PC-3 (cell line): ENCODE measurements at regions of chr12 and their contacts with region 1.

Region 1: DNA sequence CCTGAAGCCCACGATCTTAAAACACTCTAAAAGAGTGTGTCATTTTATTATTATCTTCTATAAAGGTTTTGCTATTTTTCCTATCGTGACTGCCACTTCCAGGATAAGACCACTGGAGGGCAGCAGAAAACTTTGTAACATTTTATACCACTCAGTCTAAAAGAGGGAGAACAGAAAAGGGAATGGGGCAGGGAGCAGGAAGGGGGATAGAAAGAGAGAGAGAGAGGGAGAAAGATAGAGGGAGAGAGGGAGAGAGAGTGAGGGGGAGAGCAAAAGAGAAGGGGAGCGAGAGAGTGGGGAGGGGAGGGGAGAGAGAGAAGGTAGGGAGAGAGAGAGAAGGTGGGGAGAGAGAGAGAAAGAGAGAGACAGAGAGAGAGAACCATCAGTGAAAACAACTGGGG is 2.0 kb upstream of the ART4 start:
- DNase-seq: peak; percentile 75
- ATAC-seq: peak; percentile 53
- H3K4me3 ChIP-seq: no peak overlapping the region
- H3K27ac ChIP-seq: no peak overlapping the region
- H3K4me1 ChIP-seq: peaks cover 20% of the 10 kb centered on the region
- H3K27me3 ChIP-seq: no peaks in the 10 kb centered on the region
- CTCF ChIP-seq: peak; percentile 78

Region 2: DNA sequence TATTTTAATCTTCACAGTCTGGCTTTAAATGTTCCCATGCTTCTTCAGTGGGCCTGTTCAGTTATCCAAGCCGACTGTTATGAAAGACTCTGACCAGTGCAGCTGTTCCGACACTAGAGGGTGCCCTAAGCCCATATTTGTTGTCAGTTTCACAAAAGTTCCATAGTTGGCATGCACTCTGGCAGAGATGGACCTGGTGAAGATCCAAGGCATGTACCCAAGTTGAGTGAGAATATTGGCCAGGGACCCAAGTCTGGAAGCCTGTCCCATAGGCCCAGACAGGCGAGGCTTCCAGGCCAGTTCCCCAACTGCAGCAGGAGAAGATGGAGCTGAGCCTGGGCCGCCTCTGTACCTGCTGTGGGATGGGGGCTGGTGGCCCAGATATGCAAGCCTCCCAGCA is 121.6 kb before region 1 on chr12:
- CTCF ChIA-PET with region 1: no interaction called
- POLR2A ChIA-PET with region 1: no interaction called
- intact Hi-C with region 1: loop called (anchors 2 kb)
- DNase-seq: peak; percentile 62
- ATAC-seq: peak; percentile 65
- H3K4me3 ChIP-seq: no peak overlapping the region
- H3K27ac ChIP-seq: no peak overlapping the region
- H3K4me1 ChIP-seq: no peaks in the 10 kb centered on the region
- H3K27me3 ChIP-seq: no peaks in the 10 kb centered on the region
- CTCF ChIP-seq: peak; percentile 68

Region 3: DNA sequence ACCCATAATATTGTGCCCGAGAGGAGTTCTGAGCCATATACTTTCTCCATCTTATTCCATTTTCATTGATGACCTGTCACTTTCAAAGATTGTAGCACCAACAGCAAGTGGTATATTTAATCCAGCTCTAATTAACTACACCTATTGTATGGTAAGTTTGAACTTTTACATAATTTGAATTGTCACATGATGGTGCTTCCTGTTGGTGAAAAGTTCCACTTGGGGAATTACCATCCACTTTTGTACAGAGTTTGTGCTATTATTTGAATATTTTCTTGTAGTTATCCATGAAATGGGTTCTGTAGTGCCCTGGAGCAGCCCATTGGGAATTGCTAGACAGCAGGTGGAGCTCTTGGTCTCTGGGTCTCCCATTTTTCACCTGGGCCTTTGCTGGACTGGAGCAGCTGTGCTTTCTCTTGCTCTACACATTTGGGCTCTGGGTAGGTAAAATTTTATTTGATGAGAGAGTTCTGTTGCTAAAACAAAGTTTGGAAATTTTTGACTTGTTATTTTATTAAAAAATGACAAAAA is 34.3 kb before region 1 on chr12:
- CTCF ChIA-PET with region 1: no interaction called
- POLR2A ChIA-PET with region 1: no interaction called
- intact Hi-C with region 1: loop called (anchors 2 kb)
- DNase-seq: peak; percentile 61
- ATAC-seq: peak; percentile 87
- H3K4me3 ChIP-seq: no peak overlapping the region
- H3K27ac ChIP-seq: no peak overlapping the region
- H3K4me1 ChIP-seq: no peaks in the 10 kb centered on the region
- H3K27me3 ChIP-seq: no peaks in the 10 kb centered on the region
- CTCF ChIP-seq: peak; percentile 77

Region 4: DNA sequence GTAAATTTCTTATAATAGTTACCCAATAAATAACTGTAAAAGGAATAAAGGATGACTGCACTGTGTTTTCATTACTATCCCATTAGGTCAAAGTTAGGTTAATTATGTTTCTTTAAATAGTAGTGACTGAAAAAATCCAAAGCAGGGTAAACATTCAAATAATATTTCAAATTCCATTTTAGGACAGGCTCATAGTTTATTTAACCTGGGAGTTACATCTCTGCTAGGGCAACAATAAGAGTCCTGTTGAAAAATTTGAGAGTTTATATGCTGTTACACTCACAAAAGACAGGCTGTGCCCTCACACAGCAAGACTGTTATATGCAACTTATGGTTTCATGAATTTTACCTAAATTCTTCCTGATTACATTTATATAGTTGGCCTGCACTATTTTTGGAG is 84.9 kb after region 1 on chr12:
- CTCF ChIA-PET with region 1: no interaction called
- POLR2A ChIA-PET with region 1: interaction called, 4 read pairs
- intact Hi-C with region 1: loop called (anchors 2 kb)
- DNase-seq: peak; percentile 7
- ATAC-seq: no peak
- H3K4me3 ChIP-seq: no peak overlapping the region
- H3K27ac ChIP-seq: no peak overlapping the region
- H3K4me1 ChIP-seq: peaks cover 67% of the 10 kb centered on the region
- H3K27me3 ChIP-seq: no peaks in the 10 kb centered on the region
- CTCF ChIP-seq: no peak

Region 5: DNA sequence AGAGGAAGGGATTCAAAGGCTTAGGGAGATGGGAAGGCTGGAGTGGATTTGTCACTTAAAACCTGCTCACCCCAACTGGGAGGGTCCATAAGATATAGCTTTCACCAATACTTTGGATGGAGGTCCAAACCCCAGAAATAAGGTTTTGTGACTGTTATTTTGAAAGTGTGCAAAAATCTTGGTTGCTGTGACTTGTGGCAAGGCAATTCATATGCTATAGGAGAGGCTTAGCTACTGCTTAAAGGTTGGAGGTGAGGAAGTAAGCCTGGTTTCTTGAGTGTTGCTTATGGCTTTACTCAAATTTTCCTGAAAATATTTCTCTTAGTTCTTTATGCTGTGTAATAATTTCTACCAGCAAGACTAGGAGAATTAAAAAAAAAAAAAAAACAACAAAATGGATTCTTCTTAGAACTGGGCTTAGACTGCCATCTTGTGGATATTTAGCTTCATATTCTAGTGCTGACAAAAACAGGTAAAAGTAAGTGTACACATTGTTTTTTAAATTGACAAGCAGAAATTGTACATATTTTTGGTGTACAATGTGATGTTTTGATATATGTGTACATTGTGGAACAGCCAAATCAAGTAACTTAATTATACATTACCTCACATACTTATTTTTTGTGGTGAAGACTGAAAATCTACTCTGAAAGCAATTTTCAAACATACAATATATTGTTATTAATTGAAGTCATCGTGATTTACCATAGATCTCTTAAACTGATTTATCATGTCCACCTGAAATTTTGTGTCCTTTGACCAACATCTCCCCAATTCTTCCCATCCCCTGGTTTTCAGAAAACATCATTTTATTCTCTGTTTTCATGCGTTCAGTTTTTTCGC is 150.5 kb after region 1 on chr12:
- CTCF ChIA-PET with region 1: no interaction called
- POLR2A ChIA-PET with region 1: no interaction called
- intact Hi-C with region 1: loop called (anchors 1 kb)
- DNase-seq: peak; percentile 54
- ATAC-seq: no peak; the same call in 1 of the 2 replicates
- H3K4me3 ChIP-seq: no peak overlapping the region
- H3K27ac ChIP-seq: no peak overlapping the region
- H3K4me1 ChIP-seq: peaks cover 12% of the 10 kb centered on the region
- H3K27me3 ChIP-seq: no peaks in the 10 kb centered on the region
- CTCF ChIP-seq: peak; percentile 62